Ovary (tissue), 10 donors: ENCODE measurements at regions of chr10 and their contacts with region 1.

Region 1: DNA sequence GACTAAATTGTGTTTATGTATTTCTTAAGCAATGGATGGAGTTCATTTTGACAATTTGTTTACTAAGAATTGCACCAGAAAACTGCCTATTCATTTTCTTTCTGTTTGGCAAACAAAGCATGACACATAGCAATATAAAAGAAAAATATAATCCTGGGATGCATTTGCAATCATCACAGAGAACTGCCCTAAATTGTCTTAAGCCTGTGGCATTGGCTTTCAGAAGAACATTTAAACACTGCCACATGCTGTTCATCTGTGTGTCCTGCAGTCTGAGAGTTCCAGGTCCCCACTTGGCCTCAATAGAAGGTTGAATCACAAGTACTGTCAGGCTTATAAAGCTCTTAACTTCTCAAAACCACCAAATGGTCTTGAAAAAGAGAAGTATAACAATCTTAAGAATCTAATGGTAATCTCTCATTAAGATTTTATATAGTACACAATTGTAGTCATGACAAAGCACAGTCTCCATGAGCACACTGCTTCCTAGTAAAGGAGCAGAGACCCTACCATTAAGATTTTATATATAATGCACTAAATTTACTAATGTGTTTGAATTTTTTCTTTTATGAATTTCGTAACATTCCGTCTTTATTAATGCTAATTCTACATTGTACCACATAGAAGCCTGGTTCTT is 29.9 kb downstream of the RNLS start:
- DNase-seq: peak; percentile 37 to 75 (median 39)
- H3K4me3 ChIP-seq: no peak overlapping the region
- H3K27ac ChIP-seq: no peak overlapping the region
- H3K4me1 ChIP-seq: no peaks in the 10 kb centered on the region
- H3K27me3 ChIP-seq: no peaks in the 10 kb centered on the region
- CTCF ChIP-seq: peak; percentile 61 to 87 (median 75)
- EP300 ChIP-seq: no peak
- POLR2A ChIP-seq: no peak

Region 2: GRCh38 chr10:87850742-87851205 is 702.5 kb before region 1 on chr10:
- intact Hi-C with region 1: loop called in 2 of 4 experiments (anchors 5 to 10 kb)
- DNase-seq: peak; percentile 60 to 77 (median 62)
- H3K4me3 ChIP-seq: no peak overlapping the region
- H3K27ac ChIP-seq: no peak overlapping the region
- H3K4me1 ChIP-seq: no peaks in the 10 kb centered on the region
- H3K27me3 ChIP-seq: no peaks in the 10 kb centered on the region
- CTCF ChIP-seq: peak; percentile 33 to 80 (median 64)
- EP300 ChIP-seq: no peak
- POLR2A ChIP-seq: no peak

Region 3: GRCh38 chr10:87861953-87862678 is 691.1 kb before region 1 on chr10:
- intact Hi-C with region 1: loop called in 3 of 4 experiments (anchors 5 to 10 kb)
- DNase-seq: peak; percentile 96 to 97 (median 97)
- H3K4me3 ChIP-seq: peak overlapping the region; percentile 54
- H3K27ac ChIP-seq: peak overlapping the region; percentile 93 to 97
- H3K4me1 ChIP-seq: peaks cover 2% of the 10 kb centered on the region
- H3K27me3 ChIP-seq: no peaks in the 10 kb centered on the region
- CTCF ChIP-seq: no peak
- EP300 ChIP-seq: no peak
- POLR2A ChIP-seq: peak; percentile 46

Region 4: DNA sequence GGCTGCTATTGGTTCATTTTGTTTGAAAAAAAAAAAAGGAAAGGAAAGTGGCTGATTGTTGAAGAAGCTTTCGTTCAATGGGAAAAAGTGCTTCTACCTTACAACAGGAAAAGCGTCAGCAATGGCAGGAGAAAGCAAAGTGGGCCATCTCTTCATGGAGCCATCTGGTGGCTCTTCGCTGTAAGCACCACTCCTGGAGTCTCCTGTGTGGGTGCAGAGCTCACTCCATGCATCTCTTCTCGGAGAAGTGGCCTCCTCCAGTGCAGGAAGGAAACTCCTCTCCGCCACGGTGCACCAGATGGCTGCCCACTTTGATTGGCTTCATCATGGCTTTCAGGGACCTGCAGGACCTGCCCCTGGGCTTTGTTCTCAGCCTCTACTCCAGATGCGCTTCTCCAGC is 438.9 kb before region 1 on chr10:
- intact Hi-C with region 1: no loop called
- DNase-seq: peak in 1 of 5 donors; percentile 35
- H3K4me3 ChIP-seq: no peak overlapping the region
- H3K27ac ChIP-seq: no peak overlapping the region
- H3K4me1 ChIP-seq: no peaks in the 10 kb centered on the region
- H3K27me3 ChIP-seq: no peaks in the 10 kb centered on the region
- CTCF ChIP-seq: no peak
- EP300 ChIP-seq: no peak
- POLR2A ChIP-seq: no peak

Region 5: DNA sequence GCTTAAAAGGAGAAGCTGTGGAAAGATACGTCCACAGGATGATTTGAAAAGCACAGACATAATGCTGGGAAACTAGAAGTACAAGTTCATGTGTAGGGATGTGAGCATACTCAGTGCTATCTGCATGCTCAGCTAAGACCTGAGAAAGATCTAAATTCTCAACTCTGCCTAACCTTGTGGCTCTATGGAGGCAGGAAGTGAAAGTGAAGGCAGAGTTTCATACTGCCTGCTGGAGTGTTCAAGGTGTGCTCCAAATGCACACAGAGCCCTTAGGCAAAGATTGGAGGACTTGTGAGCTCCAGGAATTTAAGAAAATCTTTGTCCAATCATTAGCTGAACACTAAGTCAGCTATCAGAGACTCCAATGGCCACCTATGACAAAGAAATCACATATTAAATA is 161.0 kb before region 1 on chr10:
- intact Hi-C with region 1: loop called in 1 of 4 experiments (anchors 5 kb)
- DNase-seq: no peak
- H3K4me3 ChIP-seq: no peak overlapping the region
- H3K27ac ChIP-seq: no peak overlapping the region
- H3K4me1 ChIP-seq: no peaks in the 10 kb centered on the region
- H3K27me3 ChIP-seq: no peaks in the 10 kb centered on the region
- CTCF ChIP-seq: no peak
- EP300 ChIP-seq: no peak
- POLR2A ChIP-seq: no peak

Region 6: DNA sequence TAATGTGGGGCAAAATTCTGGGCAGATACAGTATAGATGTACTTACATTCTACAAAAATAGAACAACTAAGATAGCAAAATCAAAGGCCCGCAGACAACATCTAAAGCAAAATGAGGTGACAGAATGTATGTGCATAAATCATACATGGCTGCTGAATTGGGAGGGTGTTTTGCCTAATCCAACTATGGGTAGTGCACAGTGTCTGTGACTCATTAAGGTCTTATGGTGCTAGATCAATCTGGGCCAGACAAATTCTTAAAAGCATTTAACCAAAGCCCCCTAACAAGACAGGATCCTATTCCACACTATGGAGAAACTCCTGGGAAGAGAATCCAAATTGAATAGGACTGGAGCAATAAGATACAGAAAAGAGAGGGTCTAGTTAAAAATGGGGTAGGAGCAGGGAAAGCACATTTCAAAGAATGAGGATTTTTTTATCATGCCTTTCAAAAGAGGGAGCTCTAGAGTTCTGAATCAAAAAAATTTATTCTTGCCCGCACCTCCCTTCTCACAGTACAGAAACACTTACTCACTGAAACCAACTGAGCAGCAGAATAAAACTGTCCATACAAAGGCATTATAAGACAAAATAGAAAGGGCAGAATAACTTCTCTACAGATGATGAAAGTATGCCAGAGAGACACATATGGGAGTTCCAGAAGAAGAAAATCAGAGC is 151.4 kb before region 1 on chr10:
- intact Hi-C with region 1: loop called in 1 of 4 experiments (anchors 5 kb)
- DNase-seq: no peak
- H3K4me3 ChIP-seq: no peak overlapping the region
- H3K27ac ChIP-seq: no peak overlapping the region
- H3K4me1 ChIP-seq: no peaks in the 10 kb centered on the region
- H3K27me3 ChIP-seq: no peaks in the 10 kb centered on the region
- CTCF ChIP-seq: peak in 1 of 3 donors; percentile 26
- EP300 ChIP-seq: no peak
- POLR2A ChIP-seq: no peak